Adrenal gland (tissue), 19 donors: ENCODE measurements at regions of chr19 and their contacts with region 1.

Region 1: GRCh38 chr19:14472202-14472938 is 2.8 kb downstream of the PTGER1 start:
- DNase-seq: peak in 6 of 7 donors; percentile 65 to 73 (median 69)
- H3K4me3 ChIP-seq: peak overlapping the region in 1 of 4 donors; percentile 8
- H3K27ac ChIP-seq: no peak overlapping the region
- H3K4me1 ChIP-seq: peaks cover 0 to 20% of the 10 kb centered on the region in 2 donors
- H3K27me3 ChIP-seq: no peaks in the 10 kb centered on the region
- CTCF ChIP-seq: peak; percentile 78 to 95 (median 91)
- POLR2A ChIP-seq: no peak

Region 2: GRCh38 chr19:13920940-13921761 is 551.2 kb before region 1 on chr19:
- intact Hi-C with region 1: no loop called
- DNase-seq: peak in 3 of 7 donors; percentile 30 to 61 (median 40)
- H3K4me3 ChIP-seq: no peak overlapping the region
- H3K27ac ChIP-seq: no peak overlapping the region
- H3K4me1 ChIP-seq: no peaks in the 10 kb centered on the region
- H3K27me3 ChIP-seq: no peaks in the 10 kb centered on the region
- CTCF ChIP-seq: no peak
- POLR2A ChIP-seq: no peak

Region 3: GRCh38 chr19:14432791-14433553 is 39.4 kb before region 1 on chr19 and contains the start of gene PKN1:
- intact Hi-C with region 1: loop called in 1 of 2 experiments (anchors 5 kb)
- DNase-seq: peak in 3 of 7 donors; percentile 50 to 64 (median 52)
- H3K4me3 ChIP-seq: peak within 1 kb of the TSS; percentile 22 to 90 (median 53)
- H3K27ac ChIP-seq: peak within 1 kb of the TSS; percentile 48 to 94 (median 80)
- H3K4me1 ChIP-seq: peaks cover 17 to 34% of the 10 kb centered on the region in 2 donors
- H3K27me3 ChIP-seq: no peaks in the 10 kb centered on the region
- CTCF ChIP-seq: peak in 1 of 6 experiments; percentile 21
- POLR2A ChIP-seq: no peak
- total RNA-seq, gene PKN1: 49.9 to 184 (median 122) TPM